ENCODE measurements at regions of chr6 and their contacts with region 1.

Region 1: GRCh38 chr6:5521322-5521721 is 260.0 kb downstream of the FARS2 start:
- DNase-seq: peak in 1 of 9 donors; percentile 7
- ATAC-seq: no peak
- H3K4me3 ChIP-seq: no peak overlapping the region
- H3K4me3 Mint-ChIP-seq: peak overlapping the region in 6 of 10 donors; percentile 10 to 53 (median 36)
- H3K27ac ChIP-seq: peak overlapping the region; percentile 24
- H3K27ac Mint-ChIP-seq: peak overlapping the region in 5 of 9 donors; percentile 28 to 66 (median 60)
- H3K4me1 ChIP-seq: peaks cover 26 to 27% of the 10 kb centered on the region in 2 donors
- H3K4me1 Mint-ChIP-seq: peaks cover 34 to 69% (median 43%) of the 10 kb centered on the region in 7 donors
- H3K27me3 ChIP-seq: no peaks in the 10 kb centered on the region
- H3K27me3 Mint-ChIP-seq: no peaks in the 10 kb centered on the region

Region 2: DNA sequence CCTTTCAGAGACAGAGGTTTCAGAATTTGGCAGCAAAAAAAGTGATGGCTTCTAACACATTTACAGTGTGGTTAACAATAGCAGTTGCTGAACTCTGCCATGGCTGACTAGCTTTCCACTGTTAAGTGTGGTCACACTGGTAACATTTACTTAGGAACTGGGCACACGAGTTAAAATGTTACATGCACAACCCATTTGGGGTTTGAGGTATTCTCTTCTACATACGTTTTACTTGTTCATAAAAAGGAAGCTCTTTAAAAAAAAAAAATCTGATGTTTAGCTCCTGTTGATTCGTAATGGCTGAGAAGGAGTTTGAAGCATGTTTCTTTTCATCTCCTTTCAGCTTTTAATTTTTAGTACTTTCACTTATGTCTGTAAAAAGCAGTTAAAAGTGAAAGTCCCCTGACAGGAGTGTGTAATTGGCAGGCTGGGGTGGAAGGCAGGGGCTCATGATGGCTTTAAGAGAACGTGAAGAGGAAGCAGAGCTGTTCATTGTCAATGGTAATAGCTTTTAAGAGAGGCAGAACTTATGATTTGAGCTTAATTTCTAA is 14.1 kb before region 1 on chr6:
- CTCF ChIA-PET with region 1: interaction called, 5 read pairs
- POLR2A ChIA-PET with region 1: interaction called, 7 read pairs
- intact Hi-C with region 1: loop called in 1 of 2 experiments (anchors 2 kb)
- DNase-seq: peak in 7 of 9 donors; percentile 14 to 63 (median 35)
- ATAC-seq: peak; percentile 76
- H3K4me3 ChIP-seq: peak overlapping the region; percentile 8
- H3K4me3 Mint-ChIP-seq: peak overlapping the region; percentile 0 to 73 (median 66)
- H3K27ac ChIP-seq: peak overlapping the region; percentile 52
- H3K27ac Mint-ChIP-seq: peak overlapping the region; percentile 1 to 91 (median 82)
- H3K4me1 ChIP-seq: peaks cover 15 to 17% of the 10 kb centered on the region in 2 donors
- H3K4me1 Mint-ChIP-seq: peaks cover 16 to 51% (median 37%) of the 10 kb centered on the region in 7 donors
- H3K27me3 ChIP-seq: no peaks in the 10 kb centered on the region
- H3K27me3 Mint-ChIP-seq: no peaks in the 10 kb centered on the region

Measured in naive thymus-derived CD4-positive, alpha-beta T cell (primary cell).